ENCODE measurements at regions of chr4 and their contacts with region 1.

Region 1: DNA sequence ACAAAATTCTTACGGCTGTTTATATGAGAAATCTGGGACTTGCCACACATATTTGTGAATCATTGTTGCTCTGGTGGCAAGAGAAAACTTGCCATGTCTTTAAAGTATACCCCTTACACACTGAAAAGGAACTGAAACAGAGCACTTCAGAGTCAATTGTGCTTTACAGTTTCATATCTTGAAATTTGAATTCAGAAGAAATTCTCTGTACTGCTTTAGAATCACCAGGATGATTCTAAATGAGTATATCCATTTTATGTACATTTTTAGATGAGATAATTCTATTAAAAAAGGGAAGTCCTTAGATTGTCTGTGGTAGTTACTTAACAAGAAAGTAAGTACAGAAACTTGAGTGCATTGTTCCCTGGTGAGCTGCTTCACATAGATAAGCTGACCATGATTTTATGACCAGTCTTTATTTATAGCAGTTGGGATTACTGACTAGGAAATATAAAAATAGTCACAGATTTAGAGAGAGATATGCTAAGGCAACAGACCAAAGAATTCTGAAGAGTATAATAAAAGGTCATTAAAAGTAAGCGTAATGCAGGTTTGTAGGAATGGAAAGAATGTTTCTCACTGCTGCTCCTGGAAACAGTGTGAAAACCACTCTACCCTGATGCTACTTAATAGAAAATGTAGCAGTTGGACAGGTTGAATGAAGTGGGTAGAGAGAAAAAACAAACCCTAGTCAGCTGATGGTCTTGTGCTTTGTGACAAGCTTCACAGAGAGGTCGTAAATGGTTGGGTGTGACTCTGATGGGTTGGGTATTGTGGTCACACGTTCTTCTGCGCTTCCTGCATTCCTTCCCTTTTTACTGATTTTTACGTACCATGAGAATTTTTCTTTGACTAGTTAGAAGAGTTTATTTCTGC is 41.0 kb downstream of the FNIP2 start:
- DNase-seq: peak; percentile 58
- H3K4me3 ChIP-seq: no peak overlapping the region
- H3K27ac ChIP-seq: peak overlapping the region; percentile 50
- H3K4me1 ChIP-seq: peaks cover 42% of the 10 kb centered on the region
- H3K27me3 ChIP-seq: no peaks in the 10 kb centered on the region
- CTCF ChIP-seq: no peak

Region 2: GRCh38 chr4:158836018-158836369 is 26.1 kb after region 1 on chr4:
- CTCF ChIA-PET with region 1: no interaction called
- dilution Hi-C with region 1: no loop called
- in situ Hi-C with region 1: no loop called
- intact Hi-C with region 1: loop called (anchors 1 kb)
- DNase-seq: no peak
- H3K4me3 ChIP-seq: no peak overlapping the region
- H3K27ac ChIP-seq: no peak overlapping the region
- H3K4me1 ChIP-seq: peaks cover 10% of the 10 kb centered on the region
- H3K27me3 ChIP-seq: no peaks in the 10 kb centered on the region
- CTCF ChIP-seq: no peak

Region 3: GRCh38 chr4:158850800-158851644 is 41.2 kb after region 1 on chr4:
- CTCF ChIA-PET with region 1: no interaction called
- dilution Hi-C with region 1: no loop called
- in situ Hi-C with region 1: no loop called
- intact Hi-C with region 1: loop called (anchors 2 kb)
- DNase-seq: no peak
- H3K4me3 ChIP-seq: no peak overlapping the region
- H3K27ac ChIP-seq: no peak overlapping the region
- H3K4me1 ChIP-seq: no peaks in the 10 kb centered on the region
- H3K27me3 ChIP-seq: no peaks in the 10 kb centered on the region
- CTCF ChIP-seq: peak; percentile 55 to 56